Activated naive CD4-positive, alpha-beta T cell treated with anti-CD3 and anti-CD28 coated beads for 36 hours (primary cell): ENCODE measurements at regions of chr6 and their contacts with region 1.

Region 1: DNA sequence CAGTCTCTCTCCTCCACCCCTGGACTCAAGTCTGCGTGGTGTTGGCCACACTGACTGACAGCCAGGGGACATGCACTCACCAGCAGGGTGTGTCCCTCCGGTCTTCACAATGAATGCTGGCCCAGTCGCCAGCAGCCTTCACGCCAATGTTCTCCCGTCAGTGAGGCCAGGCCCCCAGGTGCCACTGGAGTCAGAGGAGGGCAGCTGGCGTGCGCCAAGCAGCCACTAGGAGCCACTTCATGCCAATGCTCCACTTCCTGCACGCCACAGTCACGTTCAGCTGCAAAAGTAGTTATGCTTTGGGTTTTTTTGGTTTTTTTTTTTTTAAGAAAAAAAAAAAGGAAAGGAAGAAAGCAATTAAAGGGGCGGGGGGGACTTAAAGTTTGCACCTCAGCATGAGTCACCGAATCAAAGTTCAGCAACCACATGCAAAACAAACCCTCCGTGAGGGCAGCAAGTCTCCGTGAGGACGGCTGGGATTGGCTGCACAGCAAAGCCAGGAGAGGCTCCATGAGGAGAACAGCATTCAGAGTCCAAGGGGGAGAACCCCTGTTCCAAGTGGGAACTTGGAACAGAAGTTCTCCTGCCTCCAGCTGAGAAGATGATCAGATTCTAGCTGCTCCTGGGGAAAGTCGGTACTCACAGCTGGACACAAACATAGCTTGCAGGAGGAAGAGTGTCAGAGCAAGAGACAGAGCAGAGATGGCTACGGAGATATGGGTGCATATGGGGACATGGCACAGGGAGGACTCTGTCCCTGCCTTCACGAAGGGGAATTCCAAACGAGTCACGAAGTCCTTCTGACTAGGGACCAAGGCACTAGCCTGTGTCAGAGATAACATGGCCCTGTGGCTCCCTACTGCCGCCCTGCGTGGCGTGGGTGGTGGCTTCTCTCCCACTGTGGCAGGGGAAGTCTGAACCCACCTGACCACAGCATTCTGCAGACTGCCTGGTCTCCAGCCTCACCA is at the start of gene ZC3H12D:
- DNase-seq: peak; percentile 92
- H3K4me3 Mint-ChIP-seq: peak within 1 kb of the TSS; percentile 94
- H3K27ac Mint-ChIP-seq: peak within 1 kb of the TSS; percentile 97
- H3K4me1 Mint-ChIP-seq: peaks cover 59% of the 10 kb centered on the region
- H3K27me3 Mint-ChIP-seq: no peaks in the 10 kb centered on the region
- total RNA-seq, gene ZC3H12D: 75.8 to 82.7 TPM

Region 2: GRCh38 chr6:149266659-149267058 is 218.4 kb before region 1 on chr6:
- CTCF ChIA-PET with region 1: no interaction called
- intact Hi-C with region 1: no loop called
- DNase-seq: no peak
- H3K4me3 Mint-ChIP-seq: no peak overlapping the region
- H3K27ac Mint-ChIP-seq: peak overlapping the region; percentile 19
- H3K4me1 Mint-ChIP-seq: peaks cover 38% of the 10 kb centered on the region
- H3K27me3 Mint-ChIP-seq: no peaks in the 10 kb centered on the region

Region 3: GRCh38 chr6:149499066-149499465 is 14.0 kb after region 1 on chr6:
- CTCF ChIA-PET with region 1: interaction called, 12 read pairs
- intact Hi-C with region 1: loop called (anchors 1 kb)
- DNase-seq: no peak
- H3K4me3 Mint-ChIP-seq: no peak overlapping the region
- H3K27ac Mint-ChIP-seq: peak overlapping the region; percentile 87
- H3K4me1 Mint-ChIP-seq: peaks cover 81% of the 10 kb centered on the region
- H3K27me3 Mint-ChIP-seq: no peaks in the 10 kb centered on the region

Region 4: GRCh38 chr6:149508485-149508884 is 23.5 kb after region 1 on chr6:
- CTCF ChIA-PET with region 1: interaction called, 4 read pairs
- intact Hi-C with region 1: loop called (anchors 1 kb)
- DNase-seq: peak; percentile 72
- H3K4me3 Mint-ChIP-seq: no peak overlapping the region
- H3K27ac Mint-ChIP-seq: peak overlapping the region; percentile 91
- H3K4me1 Mint-ChIP-seq: peaks cover 57% of the 10 kb centered on the region
- H3K27me3 Mint-ChIP-seq: no peaks in the 10 kb centered on the region

Region 5: DNA sequence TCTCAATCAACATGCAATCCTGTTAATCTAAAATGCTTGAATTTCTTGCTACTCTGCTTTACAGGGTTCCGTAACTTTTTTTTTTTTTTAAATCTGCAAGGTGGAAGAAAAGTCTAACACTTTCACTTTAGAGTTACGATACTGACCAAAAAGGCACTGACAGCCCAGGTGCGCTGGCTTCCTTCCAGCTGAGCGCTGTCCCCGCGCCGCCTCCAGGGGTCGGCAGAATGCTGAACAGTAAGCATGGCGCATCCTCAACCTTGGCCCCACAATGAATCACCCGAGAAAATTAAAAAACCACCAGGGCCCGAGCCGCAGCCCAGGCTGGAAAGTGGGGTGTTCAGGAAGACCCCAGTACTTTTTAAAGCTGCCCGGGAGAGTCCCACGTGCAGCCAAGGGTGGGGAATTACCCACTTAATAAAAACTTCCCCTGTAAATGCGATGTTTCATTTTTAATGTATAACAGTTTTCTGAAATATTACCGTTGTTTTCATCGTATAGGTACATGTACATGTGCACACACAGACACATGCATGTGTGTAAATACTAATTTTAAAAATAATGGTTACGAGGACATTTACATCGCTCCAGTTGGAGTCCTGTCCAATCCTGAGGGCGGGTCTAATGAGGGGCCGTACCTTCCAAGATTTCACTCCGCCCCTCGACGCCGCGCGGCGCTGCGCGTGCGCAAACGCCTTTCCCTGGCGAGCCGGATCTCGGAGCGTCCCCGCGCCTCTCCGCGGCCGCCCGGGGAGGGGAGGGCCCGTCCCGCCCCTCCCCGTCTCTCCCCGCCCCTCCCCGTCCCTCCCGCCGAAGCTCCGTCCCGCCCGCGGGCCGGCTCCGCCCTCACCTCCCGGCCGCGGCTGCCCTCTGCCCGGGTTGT is 80.8 kb after region 1 on chr6 and contains the start of gene GINM1:
- CTCF ChIA-PET with region 1: no interaction called
- intact Hi-C with region 1: loop called (anchors 1 kb)
- DNase-seq: peak; percentile 97
- H3K4me3 Mint-ChIP-seq: peak within 1 kb of the TSS; percentile 92
- H3K27ac Mint-ChIP-seq: peak within 1 kb of the TSS; percentile 89
- H3K4me1 Mint-ChIP-seq: peaks cover 26% of the 10 kb centered on the region
- H3K27me3 Mint-ChIP-seq: no peaks in the 10 kb centered on the region
- total RNA-seq, gene GINM1: 17.6 to 18.4 TPM

Region 6: GRCh38 chr6:149717588-149718458 is 232.8 kb after region 1 on chr6 and contains the start of gene LATS1:
- CTCF ChIA-PET with region 1: no interaction called
- intact Hi-C with region 1: loop called (anchors 2 kb)
- DNase-seq: peak; percentile 95
- H3K4me3 Mint-ChIP-seq: peak within 1 kb of the TSS; percentile 84
- H3K27ac Mint-ChIP-seq: peak within 1 kb of the TSS; percentile 94
- H3K4me1 Mint-ChIP-seq: peaks cover 25% of the 10 kb centered on the region
- H3K27me3 Mint-ChIP-seq: no peaks in the 10 kb centered on the region
- total RNA-seq, gene LATS1: 18.1 to 19.6 TPM

Region 7: DNA sequence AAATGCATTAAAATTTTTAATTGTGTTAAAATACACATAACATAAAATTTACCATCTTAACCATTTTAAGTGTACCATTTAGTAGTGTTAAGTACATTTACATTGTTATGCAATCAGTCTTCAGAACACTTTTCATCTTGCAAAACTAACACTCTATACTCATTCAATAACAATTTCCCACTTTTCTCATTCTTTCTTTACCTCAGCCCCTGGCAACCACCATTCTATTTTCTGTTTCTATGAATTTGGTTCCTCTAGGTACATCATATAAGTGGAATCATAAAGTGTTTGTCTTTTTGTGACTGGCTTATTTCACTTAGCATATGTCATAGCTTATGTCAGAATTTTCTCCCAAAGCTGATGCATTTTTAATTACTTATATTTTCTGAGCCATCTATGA is 296.7 kb after region 1 on chr6:
- CTCF ChIA-PET with region 1: no interaction called
- intact Hi-C with region 1: no loop called
- DNase-seq: no peak
- H3K4me3 Mint-ChIP-seq: no peak overlapping the region
- H3K27ac Mint-ChIP-seq: no peak overlapping the region
- H3K4me1 Mint-ChIP-seq: no peaks in the 10 kb centered on the region
- H3K27me3 Mint-ChIP-seq: no peaks in the 10 kb centered on the region

Region 8: GRCh38 chr6:149815788-149816187 is 330.8 kb after region 1 on chr6:
- CTCF ChIA-PET with region 1: no interaction called
- intact Hi-C with region 1: no loop called
- DNase-seq: no peak
- H3K4me3 Mint-ChIP-seq: no peak overlapping the region
- H3K27ac Mint-ChIP-seq: no peak overlapping the region
- H3K4me1 Mint-ChIP-seq: peaks cover 2% of the 10 kb centered on the region
- H3K27me3 Mint-ChIP-seq: no peaks in the 10 kb centered on the region